Colonic mucosa (tissue), 4 donors: ENCODE measurements at regions of chr6 and their contacts with region 1.

Region 1: GRCh38 chr6:126804332-126805064 is 314.0 kb upstream of the RSPO3 start:
- DNase-seq: peak; percentile 32
- H3K4me3 ChIP-seq: no peak overlapping the region
- H3K27ac ChIP-seq: no peak overlapping the region
- H3K4me1 ChIP-seq: no peaks in the 10 kb centered on the region
- H3K27me3 ChIP-seq: no peaks in the 10 kb centered on the region
- CTCF ChIP-seq: peak; percentile 53

Region 2: GRCh38 chr6:127069659-127070279 is 265.3 kb after region 1 on chr6:
- intact Hi-C with region 1: loop called (anchors 10 kb)
- DNase-seq: no peak
- H3K4me3 ChIP-seq: no peak overlapping the region
- H3K27ac ChIP-seq: no peak overlapping the region
- H3K4me1 ChIP-seq: no peaks in the 10 kb centered on the region
- H3K27me3 ChIP-seq: no peaks in the 10 kb centered on the region
- CTCF ChIP-seq: peak; percentile 41